ENCODE measurements at regions of chr16 and their contacts with region 1.

Region 1: GRCh38 chr16:62353354-62353753 is 317.1 kb upstream of the CDH8 start:
- DNase-seq: no peak
- ATAC-seq: no peak
- H3K4me3 Mint-ChIP-seq: no peak overlapping the region
- H3K27ac Mint-ChIP-seq: no peak overlapping the region
- H3K4me1 Mint-ChIP-seq: no peaks in the 10 kb centered on the region
- H3K27me3 Mint-ChIP-seq: no peaks in the 10 kb centered on the region
- CTCF ChIP-seq: no peak

Region 2: DNA sequence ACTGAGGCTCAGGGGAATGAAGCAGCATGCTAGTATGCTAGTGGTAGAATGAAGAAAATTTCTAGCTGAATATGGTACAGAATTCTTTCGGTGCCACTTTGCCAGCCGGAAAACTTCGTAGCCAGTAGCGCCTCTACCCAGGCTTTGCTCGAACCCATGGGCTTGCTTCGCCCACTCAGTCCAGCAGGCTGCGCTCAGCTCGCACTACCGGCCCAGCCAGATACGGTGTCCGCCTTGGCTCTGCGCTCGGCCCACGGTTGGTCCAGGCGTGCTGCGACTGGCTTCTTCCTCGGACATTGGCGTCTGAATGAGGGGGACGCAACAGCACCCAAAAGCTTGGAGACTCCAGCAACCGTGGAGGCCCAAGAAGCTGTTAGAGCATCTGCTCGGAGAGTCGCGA is 55.4 kb after region 1 on chr16:
- CTCF ChIA-PET with region 1: no interaction called
- POLR2A ChIA-PET with region 1: no interaction called
- intact Hi-C with region 1: loop called (anchors 10 kb)
- DNase-seq: no peak
- ATAC-seq: no peak
- H3K4me3 Mint-ChIP-seq: no peak overlapping the region
- H3K27ac Mint-ChIP-seq: no peak overlapping the region
- H3K4me1 Mint-ChIP-seq: no peaks in the 10 kb centered on the region
- H3K27me3 Mint-ChIP-seq: no peaks in the 10 kb centered on the region
- CTCF ChIP-seq: no peak

Measured in activated B cell treated with CpG ODN at 0.5 μM for 24 hours (primary cell).